ENCODE measurements at regions of chr3 and their contacts with region 1.

Region 1: DNA sequence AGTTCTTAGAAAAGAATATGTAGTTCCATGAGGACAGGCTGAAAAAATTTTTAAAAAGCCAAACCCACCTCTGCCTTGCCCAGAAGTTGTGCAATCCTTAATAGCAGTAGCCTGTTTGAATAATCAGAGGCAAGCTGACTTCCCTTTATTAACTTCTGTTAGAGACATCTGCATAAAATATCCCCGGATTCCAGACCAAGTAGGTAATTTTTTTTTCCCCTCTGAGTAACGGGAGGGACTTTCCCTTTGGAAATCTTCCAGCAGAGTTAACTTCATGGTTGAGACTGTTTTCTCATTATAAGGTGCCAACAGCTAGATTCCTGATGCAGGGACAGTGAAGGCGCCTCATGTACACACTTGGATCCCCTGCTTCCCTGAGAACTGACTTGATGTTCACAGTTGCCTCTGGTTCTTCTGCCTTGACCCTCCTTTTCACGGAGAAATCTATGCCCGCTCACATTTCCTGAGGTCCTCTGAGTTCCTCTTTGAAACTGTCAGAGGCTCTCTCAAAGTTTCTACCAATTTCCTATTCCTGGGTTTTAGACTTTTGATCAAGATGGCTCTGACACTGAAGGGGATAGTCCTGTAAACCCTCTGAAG is 227.6 kb upstream of the BHLHE40 start:
- DNase-seq: peak; percentile 5 to 63
- H3K4me3 ChIP-seq: no peak overlapping the region
- H3K27ac ChIP-seq: peak overlapping the region; percentile 61
- H3K4me1 ChIP-seq: peaks cover 19% of the 10 kb centered on the region
- H3K27me3 ChIP-seq: no peaks in the 10 kb centered on the region
- CTCF ChIP-seq: no peak

Region 2: DNA sequence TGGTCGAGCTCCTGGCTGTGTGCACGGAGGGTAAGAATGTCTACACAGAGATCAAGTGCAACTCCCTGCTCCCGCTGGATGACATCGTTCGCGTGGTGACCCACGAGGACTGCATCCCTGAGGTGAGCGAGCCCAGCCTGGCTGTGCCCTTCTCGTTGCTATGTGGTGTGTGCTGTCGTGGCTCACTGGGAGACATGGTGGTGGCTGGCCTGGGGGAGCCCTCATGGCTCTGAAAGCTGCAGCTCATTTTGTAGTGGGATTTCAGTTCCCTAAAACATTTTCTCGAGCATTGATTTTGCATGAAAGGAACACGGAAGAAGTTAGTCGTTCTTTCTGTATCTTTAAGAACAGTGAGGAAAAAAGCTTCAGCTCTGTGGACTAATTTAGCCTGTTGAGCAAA is 58.0 kb before region 1 on chr3:
- CTCF ChIA-PET with region 1: no interaction called
- POLR2A ChIA-PET with region 1: no interaction called
- intact Hi-C with region 1: no loop called
- DNase-seq: no peak
- H3K4me3 ChIP-seq: no peak overlapping the region
- H3K27ac ChIP-seq: no peak overlapping the region
- H3K4me1 ChIP-seq: no peaks in the 10 kb centered on the region
- H3K27me3 ChIP-seq: no peaks in the 10 kb centered on the region
- CTCF ChIP-seq: no peak

Region 3: DNA sequence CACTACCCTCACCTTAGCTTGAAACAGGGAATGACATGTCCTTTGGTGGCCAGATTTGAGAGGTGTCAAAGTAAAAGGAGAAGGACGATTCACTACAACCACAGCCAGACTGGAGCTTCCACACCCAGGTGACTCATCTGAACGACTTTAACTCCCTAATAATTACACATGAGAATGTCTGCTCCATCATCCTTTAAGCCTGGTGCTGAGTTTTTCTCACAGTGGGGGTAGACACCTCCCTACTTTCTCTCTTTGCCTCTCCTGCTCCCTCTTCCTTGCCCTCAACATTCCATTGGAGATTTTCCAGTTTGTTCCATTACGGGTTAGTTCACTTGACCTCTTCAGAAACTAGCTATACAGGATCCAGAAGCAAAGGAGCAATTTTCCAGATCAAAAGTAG is 73.3 kb after region 1 on chr3:
- CTCF ChIA-PET with region 1: no interaction called
- POLR2A ChIA-PET with region 1: no interaction called
- intact Hi-C with region 1: no loop called
- DNase-seq: peak; percentile 50 to 83
- H3K4me3 ChIP-seq: peak overlapping the region; percentile 13; the same call in 1 of the 2 replicates
- H3K27ac ChIP-seq: peak overlapping the region; percentile 86
- H3K4me1 ChIP-seq: peaks cover 69% of the 10 kb centered on the region
- H3K27me3 ChIP-seq: no peaks in the 10 kb centered on the region
- CTCF ChIP-seq: no peak

Region 4: GRCh38 chr3:4866841-4867240 is 115.2 kb after region 1 on chr3:
- CTCF ChIA-PET with region 1: no interaction called
- POLR2A ChIA-PET with region 1: interaction called, 12 read pairs
- intact Hi-C with region 1: no loop called
- DNase-seq: no peak
- H3K4me3 ChIP-seq: peak overlapping the region; percentile 67; the same call in 1 of the 2 replicates
- H3K27ac ChIP-seq: peak overlapping the region; percentile 86
- H3K4me1 ChIP-seq: peaks cover 24% of the 10 kb centered on the region
- H3K27me3 ChIP-seq: no peaks in the 10 kb centered on the region
- CTCF ChIP-seq: no peak